ENCODE measurements at regions of chr1 and their contacts with region 1.

Region 1: DNA sequence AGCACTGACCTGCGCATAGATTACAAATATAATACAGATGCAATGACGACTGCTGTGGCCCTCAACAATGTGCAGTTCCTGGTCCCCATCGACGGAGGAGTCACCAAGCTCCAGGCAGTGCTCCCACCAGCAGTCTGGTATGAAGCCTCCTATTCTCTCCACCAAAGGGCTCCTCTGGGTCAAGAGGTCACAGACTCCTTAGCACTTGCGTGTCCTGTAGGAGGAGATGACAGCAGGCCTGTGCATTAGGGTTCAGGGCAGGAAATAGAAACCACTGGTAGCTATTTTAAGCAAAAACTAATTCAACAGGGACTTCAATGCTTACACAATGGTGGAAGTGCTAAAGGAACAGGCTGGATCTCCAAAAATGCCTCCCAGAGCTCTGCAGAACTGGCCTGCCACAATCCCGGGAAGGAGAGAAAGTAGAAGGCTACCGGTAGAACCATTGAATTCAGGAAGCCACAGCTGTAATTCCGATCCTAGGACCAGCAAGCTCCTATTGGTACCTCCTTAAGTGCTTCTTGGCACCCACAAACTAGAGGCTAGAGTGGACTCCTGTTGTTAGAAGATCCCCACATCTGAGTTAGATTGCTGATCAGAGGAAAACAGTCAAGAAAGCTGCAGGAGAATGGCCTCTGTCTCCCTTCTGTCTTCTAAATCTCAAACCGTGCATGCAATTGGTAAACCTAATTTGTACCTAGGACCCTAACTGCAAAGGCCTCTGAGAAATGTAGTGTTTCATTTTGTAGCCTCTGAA is 12.7 kb upstream of the DYNLT5 start:
- DNase-seq: no peak
- H3K4me3 Mint-ChIP-seq: no peak overlapping the region
- H3K27ac Mint-ChIP-seq: no peak overlapping the region
- H3K4me1 Mint-ChIP-seq: peaks cover 13% of the 10 kb centered on the region
- H3K27me3 Mint-ChIP-seq: no peaks in the 10 kb centered on the region

Region 2: DNA sequence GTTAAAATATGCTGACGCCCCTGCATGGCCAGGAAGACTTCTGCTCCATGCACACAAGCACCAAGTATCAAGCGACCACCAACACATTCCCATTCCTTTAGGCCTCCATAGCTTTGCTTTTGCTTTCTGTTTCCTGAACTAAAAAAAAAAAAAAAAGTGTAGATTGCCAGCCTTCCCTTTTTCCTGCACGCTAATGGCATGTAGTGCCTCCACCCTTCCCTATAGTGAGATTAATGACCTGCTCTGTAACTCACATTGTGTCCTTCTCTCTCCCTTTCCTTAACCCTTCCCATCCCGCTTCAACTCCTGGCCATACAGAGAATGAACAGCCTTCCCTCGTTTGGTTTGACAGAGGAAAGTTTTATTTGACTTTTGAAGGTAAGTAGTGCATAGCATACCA is 44.5 kb before region 1 on chr1:
- CTCF ChIA-PET with region 1: no interaction called
- DNase-seq: no peak
- H3K4me3 Mint-ChIP-seq: no peak overlapping the region
- H3K27ac Mint-ChIP-seq: no peak overlapping the region
- H3K4me1 Mint-ChIP-seq: no peaks in the 10 kb centered on the region
- H3K27me3 Mint-ChIP-seq: peaks cover under 1% of the 10 kb centered on the region

Region 3: DNA sequence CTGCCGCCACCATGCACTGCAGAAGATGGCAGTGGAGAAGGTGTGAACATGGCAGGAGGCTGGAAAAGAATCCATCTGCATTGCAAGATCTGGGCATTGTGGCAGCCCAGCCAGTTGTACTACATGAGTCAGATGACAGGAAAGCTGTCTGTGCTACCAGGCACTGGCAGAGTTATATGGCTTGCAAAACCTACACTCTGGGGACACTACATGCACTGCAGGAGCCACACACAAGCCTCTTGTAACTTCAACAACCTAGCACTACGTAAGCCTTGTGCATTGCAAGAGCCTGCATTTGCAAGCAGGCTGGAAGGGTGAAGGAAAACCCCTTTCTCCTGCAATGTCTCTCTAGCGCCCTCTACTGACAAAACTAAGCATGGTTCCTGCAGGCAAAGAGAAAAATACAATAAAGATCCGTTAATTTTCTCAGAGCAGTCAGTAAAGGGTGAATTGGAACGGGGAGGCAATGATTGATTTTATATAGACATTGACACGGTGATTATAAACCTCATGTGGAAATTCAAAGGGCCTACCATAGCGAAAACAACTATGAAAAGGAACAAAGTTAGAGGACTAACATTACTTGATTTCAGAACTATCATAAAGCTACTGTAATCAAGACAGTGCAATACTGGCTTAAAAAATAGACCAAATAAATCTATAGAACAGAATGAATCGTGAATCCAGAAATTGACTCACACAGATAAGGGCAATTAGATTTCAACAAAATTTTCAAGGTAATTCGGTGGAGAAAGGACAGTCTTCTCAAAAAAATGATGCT is 13.5 kb before region 1 on chr1:
- CTCF ChIA-PET with region 1: interaction called, 13 read pairs
- DNase-seq: peak; percentile 64
- H3K4me3 Mint-ChIP-seq: no peak overlapping the region
- H3K27ac Mint-ChIP-seq: no peak overlapping the region
- H3K4me1 Mint-ChIP-seq: peaks cover 15% of the 10 kb centered on the region
- H3K27me3 Mint-ChIP-seq: peaks cover 4% of the 10 kb centered on the region